Dendritic cell treated with granulocyte-macrophage colony-stimulating factor and Interleukin-4, amounts not matched to agents 40 ng/mL and 50 ng/mL, for 4 days (primary cell): ENCODE measurements at regions of chr16 and their contacts with region 1.

Region 1: DNA sequence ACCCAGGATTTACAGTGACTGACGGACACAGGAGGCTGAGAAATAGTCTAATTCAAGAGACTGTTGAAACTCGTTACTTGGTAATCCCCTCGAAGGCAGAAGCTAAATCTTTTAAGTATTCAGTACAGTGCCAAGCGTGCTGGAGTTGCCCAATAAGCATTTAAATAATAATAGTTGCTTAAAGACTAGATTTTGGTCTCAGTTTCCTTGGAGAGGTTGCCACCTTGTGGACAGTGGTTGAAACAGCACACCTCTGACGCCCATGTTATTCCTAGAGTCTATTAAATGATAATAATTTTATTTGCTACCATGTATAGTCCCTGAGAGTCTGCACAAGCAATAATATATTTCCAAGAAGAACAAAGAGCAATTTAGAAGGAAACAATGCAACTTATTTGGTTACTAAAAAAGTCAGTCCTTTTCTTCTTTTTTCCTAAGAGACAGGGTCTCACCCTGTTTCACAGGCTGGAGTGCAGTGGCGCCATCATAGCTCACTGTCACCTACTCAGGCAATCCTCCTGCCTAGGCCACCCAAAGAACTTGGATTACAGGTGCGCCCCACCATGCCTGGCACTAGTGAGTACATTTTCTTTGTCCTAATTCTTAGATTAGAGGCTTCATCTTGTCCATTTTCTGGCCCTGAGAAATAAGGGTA is 138.0 kb upstream of the NUDT7 start:
- H3K4me3 Mint-ChIP-seq: no peak overlapping the region
- H3K27ac Mint-ChIP-seq: no peak overlapping the region
- H3K4me1 Mint-ChIP-seq: peaks cover 6% of the 10 kb centered on the region
- H3K27me3 Mint-ChIP-seq: peaks cover 10% of the 10 kb centered on the region

Region 2: DNA sequence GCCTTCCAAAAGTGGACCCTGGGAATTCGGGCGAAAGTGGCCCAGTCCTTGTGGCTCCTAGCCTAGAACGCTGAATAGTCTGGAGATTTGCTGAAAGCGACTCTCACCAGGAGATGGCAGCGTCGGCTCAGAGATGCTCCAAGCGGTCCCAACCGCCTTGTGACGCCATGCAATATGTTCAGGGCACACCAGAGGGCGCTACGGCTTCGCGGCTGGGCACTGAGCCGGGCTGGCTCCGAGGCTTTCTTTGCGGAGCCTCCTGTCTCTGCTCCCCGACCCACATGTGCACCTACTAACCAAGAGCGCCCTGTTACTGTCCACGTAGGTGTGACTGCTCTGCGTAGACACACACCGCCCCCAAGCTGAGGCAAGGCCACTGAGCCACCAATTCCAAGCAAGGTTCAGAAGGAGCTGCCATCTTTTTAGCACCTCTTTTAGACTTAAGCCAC is 348.2 kb before region 1 on chr16:
- intact Hi-C with region 1: loop called (anchors 1 kb)
- H3K4me3 Mint-ChIP-seq: peak overlapping the region; percentile 59
- H3K27ac Mint-ChIP-seq: no peak overlapping the region
- H3K4me1 Mint-ChIP-seq: peaks cover 5% of the 10 kb centered on the region
- H3K27me3 Mint-ChIP-seq: peaks cover 17% of the 10 kb centered on the region

Region 3: DNA sequence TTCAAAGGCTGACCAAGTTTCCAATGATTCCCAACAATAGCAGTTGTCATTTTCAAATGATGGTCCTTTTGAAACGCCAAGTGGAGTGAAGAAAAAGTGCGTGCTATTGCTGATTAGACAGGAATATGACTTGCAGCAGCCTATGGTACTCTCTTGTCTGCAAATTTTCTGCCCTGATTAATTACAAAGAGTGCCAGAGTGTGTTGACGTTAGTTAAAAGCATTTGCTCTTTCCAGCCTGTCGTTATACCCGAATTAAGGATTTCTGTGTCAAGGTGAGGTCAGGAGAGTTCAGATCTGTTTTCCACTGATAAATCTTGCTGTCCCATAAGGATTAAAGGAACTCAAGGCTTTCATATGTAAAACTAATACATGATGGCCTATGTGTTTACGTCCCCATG is 74.5 kb before region 1 on chr16:
- intact Hi-C with region 1: no loop called
- H3K4me3 Mint-ChIP-seq: no peak overlapping the region
- H3K27ac Mint-ChIP-seq: no peak overlapping the region
- H3K4me1 Mint-ChIP-seq: no peaks in the 10 kb centered on the region
- H3K27me3 Mint-ChIP-seq: no peaks in the 10 kb centered on the region